ENCODE measurements at regions of chr7 and their contacts with region 1.

Region 1: DNA sequence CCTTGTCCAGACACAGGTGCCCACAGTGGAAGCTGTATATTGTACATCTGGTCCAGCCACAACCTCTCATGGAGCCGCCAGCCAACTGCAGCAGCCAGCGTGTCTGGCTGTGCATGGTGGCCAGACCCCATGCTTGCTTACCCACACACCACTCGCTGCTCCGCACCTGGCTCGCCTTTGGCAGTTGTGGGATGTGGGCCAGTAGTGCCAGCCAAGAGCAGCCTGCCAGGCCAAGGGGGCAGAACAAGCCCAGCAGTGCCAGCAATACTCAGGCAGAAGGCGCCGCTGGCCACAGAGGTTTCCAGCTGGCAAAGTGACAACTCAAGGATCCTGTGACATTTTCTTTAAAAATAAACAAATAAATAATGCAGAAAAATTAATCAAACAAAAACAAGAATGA is 11.7 kb upstream of the TMEM243 start:
- DNase-seq: no peak
- H3K4me3 ChIP-seq: no peak overlapping the region
- H3K27ac ChIP-seq: no peak overlapping the region
- H3K4me1 ChIP-seq: peaks cover 3% of the 10 kb centered on the region
- H3K27me3 ChIP-seq: no peaks in the 10 kb centered on the region
- CTCF ChIP-seq: no peak
- EP300 ChIP-seq: no peak
- POLR2A ChIP-seq: no peak

Region 2: DNA sequence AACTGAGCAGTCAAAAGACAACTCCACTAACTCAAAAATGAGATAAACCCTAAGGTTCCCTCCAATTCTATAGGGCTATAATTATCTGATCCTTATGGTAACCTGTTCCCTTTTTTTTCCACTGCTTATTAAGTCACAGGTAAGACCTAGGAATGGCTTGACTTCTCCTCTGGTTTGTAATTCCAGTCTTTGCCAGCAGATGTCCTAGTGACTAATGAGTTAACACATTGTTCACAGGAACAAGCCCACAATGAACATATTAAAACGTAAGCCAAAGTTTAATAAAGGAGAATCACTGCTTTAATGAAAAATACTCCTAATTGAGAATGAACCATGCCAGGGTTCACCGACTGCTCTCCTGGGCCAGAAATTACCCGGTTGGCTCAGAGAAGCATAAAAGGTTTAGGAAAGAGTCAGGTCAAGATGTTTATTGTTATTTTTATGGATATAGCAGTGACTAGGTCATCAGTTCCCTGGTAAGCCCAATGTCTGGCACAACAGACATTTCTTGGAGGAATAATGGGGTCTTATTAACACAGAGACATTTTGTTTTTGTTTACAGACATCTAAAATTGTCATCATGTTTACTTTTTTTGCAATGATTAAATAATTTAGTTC is 291.9 kb before region 1 on chr7:
- intact Hi-C with region 1: loop called in 3 of 4 experiments (anchors 10 kb)
- DNase-seq: peak in 1 of 5 donors; percentile 28
- H3K4me3 ChIP-seq: no peak overlapping the region
- H3K27ac ChIP-seq: no peak overlapping the region
- H3K4me1 ChIP-seq: no peaks in the 10 kb centered on the region
- H3K27me3 ChIP-seq: no peaks in the 10 kb centered on the region
- CTCF ChIP-seq: peak in 2 of 3 donors; percentile 43 to 44
- EP300 ChIP-seq: no peak
- POLR2A ChIP-seq: no peak

Region 3: DNA sequence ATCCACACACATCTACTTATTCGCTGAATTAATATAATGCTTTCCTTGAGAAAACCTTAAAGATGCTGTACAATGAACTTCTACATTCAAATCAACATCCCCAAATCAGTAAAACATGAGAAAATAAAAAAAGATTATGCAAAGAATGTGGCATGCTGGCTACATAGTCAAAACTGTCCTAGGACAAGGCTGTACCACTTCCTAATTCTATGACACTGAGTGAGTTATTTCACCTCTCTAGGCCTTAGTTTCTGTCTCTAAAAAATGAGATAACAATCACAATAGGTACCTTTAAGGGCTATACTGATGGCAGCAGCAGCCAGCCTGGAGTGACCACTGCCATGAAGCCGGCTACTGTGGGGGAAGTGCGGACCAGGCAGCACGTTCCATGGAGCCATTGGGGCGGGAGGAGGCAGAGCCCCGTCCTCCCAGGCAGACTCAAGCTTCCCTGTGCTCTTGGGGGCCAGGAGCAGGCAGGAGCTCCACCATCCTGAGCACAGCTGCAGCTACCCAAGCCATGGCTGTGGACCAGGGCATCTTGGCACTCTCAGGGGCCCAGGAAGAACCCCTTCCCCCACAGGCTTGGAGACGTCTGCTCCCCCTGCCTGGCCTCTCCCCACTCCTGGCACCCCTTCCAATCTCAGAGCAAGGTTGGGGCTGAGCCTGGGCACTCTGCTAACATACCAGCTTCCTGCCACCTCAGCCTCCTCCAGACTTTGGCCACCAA is 282.0 kb before region 1 on chr7:
- intact Hi-C with region 1: loop called in 2 of 4 experiments (anchors 10 kb)
- DNase-seq: no peak
- H3K4me3 ChIP-seq: no peak overlapping the region
- H3K27ac ChIP-seq: no peak overlapping the region
- H3K4me1 ChIP-seq: no peaks in the 10 kb centered on the region
- H3K27me3 ChIP-seq: no peaks in the 10 kb centered on the region
- CTCF ChIP-seq: no peak
- EP300 ChIP-seq: no peak
- POLR2A ChIP-seq: no peak

Region 4: GRCh38 chr7:87059525-87060287 is 171.6 kb before region 1 on chr7 and contains the start of gene ELAPOR2:
- intact Hi-C with region 1: loop called in 1 of 4 experiments (anchors 10 kb)
- DNase-seq: peak; percentile 58 to 76 (median 75)
- H3K4me3 ChIP-seq: peak within 1 kb of the TSS; percentile 49
- H3K27ac ChIP-seq: peak within 1 kb of the TSS in 1 of 2 donors; percentile 45
- H3K4me1 ChIP-seq: peaks cover 4% of the 10 kb centered on the region
- H3K27me3 ChIP-seq: no peaks in the 10 kb centered on the region
- CTCF ChIP-seq: peak; percentile 11 to 35 (median 24)
- EP300 ChIP-seq: no peak
- POLR2A ChIP-seq: no peak
- total RNA-seq, gene ELAPOR2: 4.0 to 8.8 (median 6.1) TPM

Region 5: DNA sequence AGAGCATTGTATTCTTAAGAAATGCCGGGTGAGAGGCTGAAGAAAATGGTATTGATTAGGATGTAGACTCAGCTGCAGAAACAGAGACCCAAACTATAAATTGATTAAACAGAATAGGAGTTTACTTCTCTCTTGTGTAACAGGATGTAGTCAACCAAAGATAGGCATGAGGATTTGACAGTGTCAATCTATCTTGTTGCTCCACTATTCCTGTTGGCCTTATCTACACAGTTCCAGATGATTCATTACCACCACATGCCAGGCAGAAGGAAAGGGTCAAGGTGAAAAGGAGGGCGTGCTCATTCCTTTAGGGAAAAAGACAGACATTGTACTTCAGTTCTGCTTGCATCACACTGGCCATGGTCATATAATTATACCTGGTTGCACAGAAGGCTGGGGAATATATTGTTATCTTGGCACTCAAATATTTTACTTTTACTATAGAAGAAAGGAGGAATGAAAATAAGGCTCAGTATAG is 90.9 kb before region 1 on chr7:
- intact Hi-C with region 1: no loop called
- DNase-seq: no peak
- H3K4me3 ChIP-seq: no peak overlapping the region
- H3K27ac ChIP-seq: no peak overlapping the region
- H3K4me1 ChIP-seq: no peaks in the 10 kb centered on the region
- H3K27me3 ChIP-seq: no peaks in the 10 kb centered on the region
- CTCF ChIP-seq: no peak
- EP300 ChIP-seq: no peak
- POLR2A ChIP-seq: no peak

Region 6: DNA sequence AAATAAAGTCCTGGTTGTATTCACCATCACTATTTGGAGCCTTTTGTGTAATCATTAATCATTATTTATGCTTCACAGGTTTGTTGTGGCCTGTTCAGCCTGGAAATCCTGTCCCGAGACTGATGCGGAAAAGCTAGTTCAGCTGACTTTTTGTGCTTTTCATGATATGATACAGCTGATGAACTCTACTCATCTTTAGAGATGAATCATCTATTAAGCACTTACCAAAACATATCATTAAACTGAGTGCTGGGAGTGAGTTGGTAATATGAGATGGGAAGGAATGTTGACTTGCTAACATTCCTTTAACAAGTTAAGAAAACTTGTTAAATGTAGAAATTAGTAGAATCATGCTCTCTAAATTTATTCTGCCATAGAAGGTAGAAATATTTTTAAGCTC is 167.2 kb after region 1 on chr7:
- intact Hi-C with region 1: no loop called
- DNase-seq: no peak
- H3K4me3 ChIP-seq: no peak overlapping the region
- H3K27ac ChIP-seq: no peak overlapping the region
- H3K4me1 ChIP-seq: no peaks in the 10 kb centered on the region
- H3K27me3 ChIP-seq: no peaks in the 10 kb centered on the region
- CTCF ChIP-seq: no peak
- EP300 ChIP-seq: no peak
- POLR2A ChIP-seq: no peak

Region 7: GRCh38 chr7:87528741-87529140 is 297.5 kb after region 1 on chr7:
- intact Hi-C with region 1: no loop called
- DNase-seq: no peak
- H3K4me3 ChIP-seq: no peak overlapping the region
- H3K27ac ChIP-seq: no peak overlapping the region
- H3K4me1 ChIP-seq: no peaks in the 10 kb centered on the region
- H3K27me3 ChIP-seq: no peaks in the 10 kb centered on the region
- CTCF ChIP-seq: no peak
- EP300 ChIP-seq: no peak
- POLR2A ChIP-seq: no peak